ENCODE measurements at regions of chr1 and their contacts with region 1.

Region 1: GRCh38 chr1:2525920-2526823 is at the start of gene PANK4:
- ATAC-seq: peak; percentile 76 to 94 (median 78)
- H3K4me3 ChIP-seq: peak within 1 kb of the TSS; percentile 60 to 91 (median 80)
- H3K27ac ChIP-seq: peak within 1 kb of the TSS; percentile 97 to 98
- H3K4me1 ChIP-seq: peaks cover 52 to 55% of the 10 kb centered on the region in 2 donors
- total RNA-seq, gene PANK4: 24.9 to 44.0 (median 37.3) TPM

Region 2: GRCh38 chr1:2290595-2291510 is 235.3 kb before region 1 on chr1:
- in situ Hi-C with region 1: no loop called
- ATAC-seq: peak in 7 of 8 experiments; percentile 6 to 89 (median 21)
- H3K4me3 ChIP-seq: no peak overlapping the region
- H3K27ac ChIP-seq: peak overlapping the region; percentile 12 to 59
- H3K4me1 ChIP-seq: peaks cover 40 to 56% of the 10 kb centered on the region in 2 donors

Region 3: GRCh38 chr1:2443277-2444137 is 82.7 kb before region 1 on chr1:
- in situ Hi-C with region 1: loop called in 1 of 9 experiments (anchors 25 kb)
- ATAC-seq: peak in 7 of 8 experiments; percentile 5 to 76 (median 71)
- H3K4me3 ChIP-seq: peak overlapping the region; percentile 34 to 42 (median 37)
- H3K27ac ChIP-seq: peak overlapping the region in 1 of 2 donors; percentile 4
- H3K4me1 ChIP-seq: peaks cover 61 to 69% of the 10 kb centered on the region in 2 donors

Measured in motor neuron (in vitro differentiated cells).